ENCODE measurements at regions of chr15 and their contacts with region 1.

Region 1: DNA sequence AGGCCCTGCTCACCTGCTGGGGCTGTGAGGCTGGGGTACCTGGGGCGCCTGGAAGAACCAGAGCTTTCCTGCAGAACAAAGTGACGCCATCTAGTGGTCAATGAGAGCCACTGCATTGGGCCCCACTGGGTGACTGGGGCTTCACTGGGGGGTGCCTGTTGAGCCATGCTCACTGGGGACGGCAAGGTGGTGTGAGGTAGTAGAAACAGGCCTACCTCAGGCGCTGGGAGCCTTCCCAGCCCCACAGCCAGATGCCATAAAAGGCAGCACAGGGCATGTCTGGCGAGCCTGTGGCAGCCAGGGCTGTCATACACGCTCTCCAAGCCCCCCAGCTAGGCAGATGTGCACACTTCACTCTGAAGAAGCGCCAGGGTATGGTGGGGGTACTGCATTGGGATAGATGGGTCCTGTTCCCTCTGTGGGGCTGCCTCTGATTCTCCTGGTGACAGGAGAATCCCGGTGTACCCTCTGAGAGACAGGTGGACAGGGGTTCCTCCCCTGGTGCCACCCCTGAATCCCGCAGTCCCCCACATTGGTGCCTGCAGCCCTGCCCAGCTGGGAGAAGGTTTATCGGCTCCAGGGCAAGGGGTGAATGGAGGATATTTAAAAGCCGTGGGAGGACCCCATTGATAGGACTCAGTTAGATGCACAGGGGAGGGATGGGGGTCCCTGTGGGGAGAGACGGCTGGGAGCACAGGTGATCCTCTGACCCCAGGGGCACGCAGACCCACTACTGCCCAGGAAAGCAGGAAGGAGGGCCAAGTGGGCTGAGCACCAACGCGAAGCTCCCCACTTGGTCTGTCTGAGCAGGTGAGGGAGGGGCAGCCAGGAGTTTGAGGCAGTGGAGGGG is 178.8 kb downstream of the NSMCE3 start:
- DNase-seq: peak; percentile 57
- H3K4me3 Mint-ChIP-seq: no peak overlapping the region
- H3K27ac Mint-ChIP-seq: no peak overlapping the region
- H3K4me1 Mint-ChIP-seq: peaks cover 22% of the 10 kb centered on the region
- H3K27me3 Mint-ChIP-seq: no peaks in the 10 kb centered on the region

Region 2: GRCh38 chr15:28885630-28886430 is 205.0 kb before region 1 on chr15 and contains the start of gene APBA2:
- CTCF ChIA-PET with region 1: interaction called, 4 read pairs
- intact Hi-C with region 1: loop called (anchors 2 kb)
- DNase-seq: peak; percentile 52
- H3K4me3 Mint-ChIP-seq: peak within 1 kb of the TSS; percentile 77
- H3K27ac Mint-ChIP-seq: peak within 1 kb of the TSS; percentile 50
- H3K4me1 Mint-ChIP-seq: peaks cover 37% of the 10 kb centered on the region
- H3K27me3 Mint-ChIP-seq: no peaks in the 10 kb centered on the region
- total RNA-seq, gene APBA2: 16.2 to 18.3 TPM

Region 3: DNA sequence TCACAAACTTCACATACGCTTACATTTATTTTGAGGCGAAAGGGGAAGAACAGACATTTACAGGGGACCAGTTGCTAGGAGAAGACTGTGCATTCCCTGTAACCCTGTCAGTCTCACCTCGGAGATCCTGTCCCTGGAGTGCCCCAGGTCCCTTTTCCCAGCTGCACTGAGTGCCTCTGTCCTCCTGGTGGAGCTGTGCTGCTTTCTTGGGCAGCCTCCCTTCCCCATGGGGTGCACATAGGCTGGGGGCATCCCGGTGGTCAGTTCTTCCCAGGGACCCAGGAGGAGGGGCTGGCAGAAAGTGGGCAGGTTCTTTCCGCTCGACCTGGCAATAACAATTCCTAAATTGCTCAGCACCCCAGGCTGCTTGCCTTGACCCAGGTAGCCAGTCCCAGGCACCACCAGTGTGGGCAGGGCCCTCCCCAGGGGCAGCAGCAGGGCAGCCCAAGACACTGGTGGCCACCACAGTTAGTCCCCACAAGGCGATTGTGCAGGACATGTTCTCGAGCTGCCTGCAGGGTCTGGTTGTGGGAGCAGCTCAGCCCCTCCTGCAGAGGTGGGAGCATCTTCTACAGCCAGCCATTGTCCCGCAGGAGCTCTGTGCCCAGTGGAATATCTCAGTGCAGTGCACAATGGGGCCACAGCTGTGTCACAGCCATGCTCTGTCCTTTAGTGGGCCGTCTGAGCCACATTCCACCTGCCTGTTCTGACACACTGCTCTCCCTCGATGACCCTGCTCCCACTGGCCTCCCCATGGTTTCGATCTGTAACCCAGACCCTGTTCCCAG is 168.7 kb before region 1 on chr15:
- CTCF ChIA-PET with region 1: interaction called, 5 read pairs
- intact Hi-C with region 1: loop called (anchors 5 kb)
- DNase-seq: peak; percentile 12
- H3K4me3 Mint-ChIP-seq: no peak overlapping the region
- H3K27ac Mint-ChIP-seq: no peak overlapping the region
- H3K4me1 Mint-ChIP-seq: peaks cover 71% of the 10 kb centered on the region
- H3K27me3 Mint-ChIP-seq: no peaks in the 10 kb centered on the region

Region 4: GRCh38 chr15:28984421-28985315 is 106.2 kb before region 1 on chr15:
- CTCF ChIA-PET with region 1: interaction called, 3 read pairs
- intact Hi-C with region 1: loop called (anchors 5 kb)
- DNase-seq: no peak
- H3K4me3 Mint-ChIP-seq: no peak overlapping the region
- H3K27ac Mint-ChIP-seq: no peak overlapping the region
- H3K4me1 Mint-ChIP-seq: peaks cover 27% of the 10 kb centered on the region
- H3K27me3 Mint-ChIP-seq: no peaks in the 10 kb centered on the region

Region 5: GRCh38 chr15:28994831-28995596 is 95.8 kb before region 1 on chr15:
- CTCF ChIA-PET with region 1: interaction called, 7 read pairs
- intact Hi-C with region 1: loop called (anchors 5 kb)
- DNase-seq: no peak
- H3K4me3 Mint-ChIP-seq: no peak overlapping the region
- H3K27ac Mint-ChIP-seq: no peak overlapping the region
- H3K4me1 Mint-ChIP-seq: peaks cover 9% of the 10 kb centered on the region
- H3K27me3 Mint-ChIP-seq: no peaks in the 10 kb centered on the region

Region 6: GRCh38 chr15:29103824-29104565 is 13.2 kb after region 1 on chr15:
- CTCF ChIA-PET with region 1: interaction called, 55 read pairs
- intact Hi-C with region 1: no loop called
- DNase-seq: peak; percentile 59
- H3K4me3 Mint-ChIP-seq: no peak overlapping the region
- H3K27ac Mint-ChIP-seq: no peak overlapping the region
- H3K4me1 Mint-ChIP-seq: no peaks in the 10 kb centered on the region
- H3K27me3 Mint-ChIP-seq: no peaks in the 10 kb centered on the region

Region 7: GRCh38 chr15:29631076-29632070 is 540.5 kb after region 1 on chr15:
- CTCF ChIA-PET with region 1: no interaction called
- intact Hi-C with region 1: no loop called
- DNase-seq: no peak
- H3K4me3 Mint-ChIP-seq: no peak overlapping the region
- H3K27ac Mint-ChIP-seq: no peak overlapping the region
- H3K4me1 Mint-ChIP-seq: no peaks in the 10 kb centered on the region
- H3K27me3 Mint-ChIP-seq: peaks cover 14% of the 10 kb centered on the region